CD4-positive, alpha-beta memory T cell (primary cell): ENCODE measurements at regions of chr12 and their contacts with region 1.

Region 1: DNA sequence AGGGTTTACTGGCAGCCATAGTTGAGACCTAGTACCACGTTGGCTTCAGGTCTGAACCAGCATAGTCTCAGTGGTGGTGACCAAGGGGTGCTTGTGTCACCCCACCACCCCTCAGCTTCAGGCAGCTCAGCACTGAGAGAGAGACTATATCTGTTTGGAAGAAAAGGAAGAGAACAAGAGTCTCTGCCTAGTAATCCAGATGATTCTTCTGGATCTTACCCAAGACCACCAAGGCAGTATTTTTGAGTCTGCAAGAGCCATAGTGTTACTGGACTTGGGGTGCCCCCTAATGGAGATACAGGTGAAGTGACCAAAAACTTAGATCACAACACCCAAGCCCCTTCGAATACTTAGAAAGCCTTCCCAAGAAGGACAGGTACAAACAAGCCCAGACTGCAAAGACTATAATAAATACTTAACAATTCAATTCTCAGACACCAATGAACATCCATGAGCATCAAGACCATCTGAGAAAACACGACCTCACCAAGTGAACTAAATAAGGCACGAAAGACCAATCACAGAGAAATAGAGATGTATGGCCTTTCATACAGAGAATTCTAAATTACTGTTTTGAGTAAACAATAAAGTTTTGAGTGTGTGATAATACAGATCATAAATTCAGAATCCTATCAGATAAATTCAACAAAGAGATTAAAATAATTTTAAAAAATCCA is 107.0 kb downstream of the HELB start:
- DNase-seq: peak in 4 of 5 donors; percentile 51 to 57 (median 54)
- H3K4me3 ChIP-seq: no peak overlapping the region
- H3K4me3 Mint-ChIP-seq: no peak overlapping the region
- H3K27ac ChIP-seq: no peak overlapping the region
- H3K27ac Mint-ChIP-seq: no peak overlapping the region
- H3K4me1 ChIP-seq: no peaks in the 10 kb centered on the region
- H3K4me1 Mint-ChIP-seq: peaks cover 0 to 4% (median 2%) of the 10 kb centered on the region in 4 donors
- H3K27me3 ChIP-seq: no peaks in the 10 kb centered on the region
- H3K27me3 Mint-ChIP-seq: peaks cover 19 to 33% of the 10 kb centered on the region in 2 donors

Region 2: DNA sequence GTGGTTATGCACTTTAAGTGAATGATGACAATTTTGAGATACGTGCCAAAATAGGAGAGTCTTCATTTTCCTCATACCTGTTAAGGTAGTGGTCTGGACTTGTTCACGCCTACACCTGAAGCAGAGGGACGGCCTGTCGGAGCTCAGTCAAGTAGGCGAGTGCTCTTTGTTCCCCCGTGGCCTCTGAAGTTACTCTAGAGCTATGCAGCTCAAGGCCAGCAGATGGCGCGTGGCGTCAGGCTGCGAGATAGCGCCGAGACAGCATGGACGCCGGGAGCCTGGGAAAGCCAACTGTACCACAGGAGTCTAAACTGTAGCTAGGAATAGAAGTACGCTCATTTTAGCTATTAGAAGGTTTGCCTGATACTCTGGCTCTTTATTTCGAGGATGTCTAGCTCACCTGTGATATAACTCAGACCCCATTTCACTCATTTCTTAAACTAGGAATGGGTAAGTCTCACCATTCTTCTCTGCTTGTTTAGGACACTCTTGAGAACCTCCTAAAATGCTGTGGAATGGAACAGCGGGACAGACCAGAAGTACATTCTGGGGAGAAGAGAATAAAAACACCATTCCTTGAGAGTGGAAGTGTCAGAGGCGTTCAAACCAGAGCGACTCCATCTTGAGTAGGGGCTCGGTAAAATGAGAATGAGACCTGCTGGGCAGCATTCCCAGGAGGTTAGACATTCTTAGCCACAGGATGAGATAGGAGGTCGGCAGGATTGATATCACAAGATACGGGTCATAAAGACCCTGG is 852.5 kb before region 1 on chr12:
- CTCF ChIA-PET with region 1: no interaction called
- POLR2A ChIA-PET with region 1: no interaction called
- intact Hi-C with region 1: loop called (anchors 5 kb)
- DNase-seq: peak in 4 of 5 donors; percentile 18 to 34 (median 28)
- H3K4me3 ChIP-seq: no peak overlapping the region
- H3K4me3 Mint-ChIP-seq: peak overlapping the region in 1 of 8 donors; percentile 38
- H3K27ac ChIP-seq: no peak overlapping the region
- H3K27ac Mint-ChIP-seq: no peak overlapping the region
- H3K4me1 ChIP-seq: peaks cover 3% of the 10 kb centered on the region
- H3K4me1 Mint-ChIP-seq: peaks cover 0 to 8% (median 3%) of the 10 kb centered on the region in 4 donors
- H3K27me3 ChIP-seq: no peaks in the 10 kb centered on the region
- H3K27me3 Mint-ChIP-seq: peaks cover 4% of the 10 kb centered on the region in 2 donors

Region 3: DNA sequence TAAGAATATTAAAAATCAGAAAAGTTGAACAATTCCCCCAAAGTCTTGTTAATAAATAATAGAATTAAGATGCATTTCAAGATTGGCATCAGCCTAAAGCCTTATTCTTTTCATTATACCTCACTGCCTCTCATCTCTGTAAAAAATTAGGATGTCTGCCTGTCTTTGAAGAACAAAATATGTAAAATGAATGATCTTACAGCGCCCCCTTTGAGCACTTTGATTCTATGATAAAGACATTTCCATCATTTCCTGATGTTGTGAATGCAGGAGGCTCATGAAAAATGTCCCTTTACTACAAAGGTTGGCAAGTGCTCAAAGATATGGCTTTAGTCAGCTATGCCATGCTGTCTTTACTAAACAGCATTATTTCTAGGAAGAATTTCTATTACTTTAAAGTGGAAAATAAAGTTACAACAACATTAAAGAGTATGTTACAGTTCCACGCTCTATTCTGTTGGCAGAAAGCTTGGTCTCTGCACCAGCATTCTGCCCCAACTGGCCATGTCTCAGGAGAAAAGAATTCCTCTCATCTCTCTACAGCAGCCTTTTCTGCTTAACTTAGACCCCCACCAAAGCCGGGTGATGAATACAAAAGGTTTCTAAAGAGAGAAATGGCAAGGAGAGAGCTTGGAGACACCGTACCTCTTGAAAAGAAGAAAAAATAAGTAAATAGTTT is 373.9 kb before region 1 on chr12:
- CTCF ChIA-PET with region 1: no interaction called
- POLR2A ChIA-PET with region 1: no interaction called
- intact Hi-C with region 1: no loop called
- DNase-seq: no peak
- H3K4me3 ChIP-seq: no peak overlapping the region
- H3K4me3 Mint-ChIP-seq: no peak overlapping the region
- H3K27ac ChIP-seq: no peak overlapping the region
- H3K27ac Mint-ChIP-seq: no peak overlapping the region
- H3K4me1 ChIP-seq: no peaks in the 10 kb centered on the region
- H3K4me1 Mint-ChIP-seq: no peaks in the 10 kb centered on the region
- H3K27me3 ChIP-seq: no peaks in the 10 kb centered on the region
- H3K27me3 Mint-ChIP-seq: peaks cover 22 to 23% of the 10 kb centered on the region in 2 donors

Region 4: GRCh38 chr12:66144791-66145754 is 264.3 kb before region 1 on chr12:
- CTCF ChIA-PET with region 1: interaction called, 3 read pairs
- POLR2A ChIA-PET with region 1: no interaction called
- intact Hi-C with region 1: loop called (anchors 10 kb)
- DNase-seq: no peak
- H3K4me3 ChIP-seq: no peak overlapping the region
- H3K4me3 Mint-ChIP-seq: no peak overlapping the region
- H3K27ac ChIP-seq: no peak overlapping the region
- H3K27ac Mint-ChIP-seq: peak overlapping the region in 6 of 7 donors; percentile 29 to 72 (median 37)
- H3K4me1 ChIP-seq: no peaks in the 10 kb centered on the region
- H3K4me1 Mint-ChIP-seq: peaks cover 4 to 14% (median 8%) of the 10 kb centered on the region in 4 donors
- H3K27me3 ChIP-seq: no peaks in the 10 kb centered on the region
- H3K27me3 Mint-ChIP-seq: no peaks in the 10 kb centered on the region

Region 5: GRCh38 chr12:66269757-66270383 is 139.5 kb before region 1 on chr12:
- CTCF ChIA-PET with region 1: interaction called, 445 read pairs
- POLR2A ChIA-PET with region 1: interaction called, 7 read pairs
- intact Hi-C with region 1: loop called (anchors 1 kb)
- DNase-seq: peak in 4 of 5 donors; percentile 51 to 59 (median 54)
- H3K4me3 ChIP-seq: no peak overlapping the region
- H3K4me3 Mint-ChIP-seq: no peak overlapping the region
- H3K27ac ChIP-seq: no peak overlapping the region
- H3K27ac Mint-ChIP-seq: no peak overlapping the region
- H3K4me1 ChIP-seq: peaks cover 13% of the 10 kb centered on the region
- H3K4me1 Mint-ChIP-seq: peaks cover 1 to 10% (median 4%) of the 10 kb centered on the region in 4 donors
- H3K27me3 ChIP-seq: no peaks in the 10 kb centered on the region
- H3K27me3 Mint-ChIP-seq: no peaks in the 10 kb centered on the region

Region 6: DNA sequence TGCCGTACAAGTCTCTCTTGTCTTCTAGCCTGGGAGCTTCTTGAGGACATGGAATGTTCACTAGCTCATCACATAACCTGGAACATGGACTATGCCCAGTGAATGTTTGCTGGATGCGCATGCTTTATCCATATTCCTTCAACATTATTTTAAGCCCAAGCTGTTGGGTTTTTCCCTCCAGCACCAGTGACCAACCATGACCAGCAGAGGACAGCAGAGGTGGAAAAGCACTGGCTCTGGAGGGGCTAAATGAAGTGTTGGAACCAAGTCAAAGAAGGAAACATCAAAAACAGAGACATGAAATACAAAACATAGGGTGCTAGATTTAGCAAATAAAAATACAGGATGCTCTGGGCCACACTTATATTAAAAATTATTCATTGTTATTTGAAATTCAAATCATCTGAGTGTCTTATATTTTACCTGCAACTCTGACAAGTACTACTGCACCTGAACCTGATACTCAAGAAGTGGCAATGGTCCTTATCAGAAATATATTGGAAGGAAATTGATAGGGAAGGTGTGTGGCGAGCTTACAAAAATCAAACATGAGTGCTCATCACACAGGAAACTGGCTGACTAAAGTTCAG is 130.1 kb before region 1 on chr12:
- CTCF ChIA-PET with region 1: interaction called, 445 read pairs
- POLR2A ChIA-PET with region 1: interaction called, 4 read pairs
- intact Hi-C with region 1: loop called (anchors 1 kb)
- DNase-seq: peak; percentile 43 to 58 (median 58)
- H3K4me3 ChIP-seq: no peak overlapping the region
- H3K4me3 Mint-ChIP-seq: peak overlapping the region; percentile 17 to 82 (median 65)
- H3K27ac ChIP-seq: no peak overlapping the region
- H3K27ac Mint-ChIP-seq: peak overlapping the region in 4 of 7 donors; percentile 5 to 58 (median 28)
- H3K4me1 ChIP-seq: peaks cover 43% of the 10 kb centered on the region
- H3K4me1 Mint-ChIP-seq: peaks cover 37 to 74% (median 59%) of the 10 kb centered on the region in 4 donors
- H3K27me3 ChIP-seq: no peaks in the 10 kb centered on the region
- H3K27me3 Mint-ChIP-seq: no peaks in the 10 kb centered on the region

Region 7: GRCh38 chr12:66393890-66394289 is 15.4 kb before region 1 on chr12:
- CTCF ChIA-PET with region 1: interaction called, 18 read pairs
- POLR2A ChIA-PET with region 1: no interaction called
- intact Hi-C with region 1: no loop called
- DNase-seq: peak in 4 of 5 donors; percentile 18 to 29 (median 26)
- H3K4me3 ChIP-seq: no peak overlapping the region
- H3K4me3 Mint-ChIP-seq: peak overlapping the region in 6 of 8 donors; percentile 27 to 76 (median 53)
- H3K27ac ChIP-seq: no peak overlapping the region
- H3K27ac Mint-ChIP-seq: no peak overlapping the region
- H3K4me1 ChIP-seq: peaks cover 18% of the 10 kb centered on the region
- H3K4me1 Mint-ChIP-seq: peaks cover 14 to 31% (median 20%) of the 10 kb centered on the region in 4 donors
- H3K27me3 ChIP-seq: no peaks in the 10 kb centered on the region
- H3K27me3 Mint-ChIP-seq: peaks cover 0 to 6% of the 10 kb centered on the region in 2 donors

Region 8: GRCh38 chr12:66693901-66694675 is 284.8 kb after region 1 on chr12:
- CTCF ChIA-PET with region 1: no interaction called
- POLR2A ChIA-PET with region 1: no interaction called
- intact Hi-C with region 1: loop called (anchors 1 kb)
- DNase-seq: peak in 4 of 5 donors; percentile 33 to 48 (median 36)
- H3K4me3 ChIP-seq: no peak overlapping the region
- H3K4me3 Mint-ChIP-seq: no peak overlapping the region
- H3K27ac ChIP-seq: no peak overlapping the region
- H3K27ac Mint-ChIP-seq: no peak overlapping the region
- H3K4me1 ChIP-seq: no peaks in the 10 kb centered on the region
- H3K4me1 Mint-ChIP-seq: peaks cover 0 to 1% (median 0%) of the 10 kb centered on the region in 4 donors
- H3K27me3 ChIP-seq: no peaks in the 10 kb centered on the region
- H3K27me3 Mint-ChIP-seq: peaks cover 5 to 6% of the 10 kb centered on the region in 2 donors